PC-3 (cell line): ENCODE measurements at regions of chr15 and their contacts with region 1.

Region 1: GRCh38 chr15:76330080-76330680 is 6.4 kb upstream of the ISL2 start:
- DNase-seq: peak; percentile 79
- ATAC-seq: peak; percentile 83
- H3K4me3 ChIP-seq: no peak overlapping the region
- H3K27ac ChIP-seq: no peak overlapping the region
- H3K4me1 ChIP-seq: peaks cover 18% of the 10 kb centered on the region
- H3K27me3 ChIP-seq: no peaks in the 10 kb centered on the region
- CTCF ChIP-seq: peak; percentile 56

Region 2: DNA sequence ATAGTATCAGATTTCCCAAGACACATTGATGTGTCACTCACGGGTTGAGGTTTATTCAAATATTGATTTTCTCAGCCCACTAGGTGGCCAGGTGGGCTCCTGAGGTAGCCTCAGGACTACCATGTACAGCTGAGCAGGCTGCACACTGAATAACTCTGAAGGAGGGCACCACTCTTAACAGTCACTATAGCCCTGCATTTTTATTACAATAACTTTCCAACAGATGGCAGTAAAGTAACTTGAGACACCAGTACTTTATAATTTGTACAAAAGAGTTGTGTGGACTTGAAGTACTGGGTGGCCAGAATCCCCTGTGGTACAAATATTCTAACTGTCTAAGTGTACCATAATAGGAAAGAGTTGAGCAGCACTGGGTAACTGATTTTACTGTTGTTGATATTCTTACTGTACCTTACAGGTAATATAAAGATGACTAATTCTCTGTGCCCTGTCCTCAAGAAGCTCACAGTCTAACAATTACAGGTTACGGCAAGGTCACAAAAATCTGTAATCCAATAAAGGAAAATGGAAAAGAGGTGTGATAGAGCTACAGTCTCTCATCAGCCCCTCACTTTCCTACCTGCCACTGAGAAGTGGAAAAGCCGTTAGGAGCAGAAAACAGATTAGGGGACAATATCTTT is 94.9 kb before region 1 on chr15:
- CTCF ChIA-PET with region 1: no interaction called
- POLR2A ChIA-PET with region 1: no interaction called
- intact Hi-C with region 1: loop called (anchors 1 kb)
- DNase-seq: peak; percentile 73
- ATAC-seq: peak; percentile 89
- H3K4me3 ChIP-seq: no peak overlapping the region
- H3K27ac ChIP-seq: no peak overlapping the region
- H3K4me1 ChIP-seq: no peaks in the 10 kb centered on the region
- H3K27me3 ChIP-seq: no peaks in the 10 kb centered on the region
- CTCF ChIP-seq: peak; percentile 76

Region 3: DNA sequence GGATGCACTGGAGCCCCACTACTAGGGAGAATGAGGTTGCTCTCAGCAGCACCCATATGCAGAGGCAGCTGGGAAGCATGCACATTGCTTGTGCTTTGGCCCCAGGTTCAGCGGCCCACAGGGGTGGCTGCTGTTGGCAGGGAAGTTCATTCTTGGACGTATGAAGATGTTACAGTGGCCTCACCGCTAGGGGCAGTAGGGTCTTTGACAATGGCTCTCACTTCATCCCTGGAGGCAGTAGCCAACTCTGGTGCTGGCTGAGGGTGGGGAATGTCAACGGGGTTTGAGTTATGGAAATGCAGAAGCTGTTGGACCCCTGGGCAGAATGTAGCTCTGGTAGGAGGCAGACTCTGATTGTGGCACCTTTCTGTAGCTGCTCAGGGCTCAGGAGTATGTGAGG is 295.1 kb after region 1 on chr15:
- CTCF ChIA-PET with region 1: no interaction called
- POLR2A ChIA-PET with region 1: no interaction called
- intact Hi-C with region 1: no loop called
- DNase-seq: no peak
- ATAC-seq: no peak
- H3K4me3 ChIP-seq: no peak overlapping the region
- H3K27ac ChIP-seq: no peak overlapping the region
- H3K4me1 ChIP-seq: no peaks in the 10 kb centered on the region
- H3K27me3 ChIP-seq: no peaks in the 10 kb centered on the region
- CTCF ChIP-seq: no peak

Region 4: GRCh38 chr15:77528290-77528967 is 1198.2 kb after region 1 on chr15:
- CTCF ChIA-PET with region 1: no interaction called
- POLR2A ChIA-PET with region 1: interaction called, 14 read pairs
- intact Hi-C with region 1: no loop called
- DNase-seq: no peak
- ATAC-seq: no peak
- H3K4me3 ChIP-seq: no peak overlapping the region
- H3K27ac ChIP-seq: no peak overlapping the region
- H3K4me1 ChIP-seq: peaks cover 4% of the 10 kb centered on the region; the same call in 1 of the 2 replicates
- H3K27me3 ChIP-seq: no peaks in the 10 kb centered on the region
- CTCF ChIP-seq: no peak